GM12878 (cell line): ENCODE measurements at regions of chr10 and their contacts with region 1.

Region 1: DNA sequence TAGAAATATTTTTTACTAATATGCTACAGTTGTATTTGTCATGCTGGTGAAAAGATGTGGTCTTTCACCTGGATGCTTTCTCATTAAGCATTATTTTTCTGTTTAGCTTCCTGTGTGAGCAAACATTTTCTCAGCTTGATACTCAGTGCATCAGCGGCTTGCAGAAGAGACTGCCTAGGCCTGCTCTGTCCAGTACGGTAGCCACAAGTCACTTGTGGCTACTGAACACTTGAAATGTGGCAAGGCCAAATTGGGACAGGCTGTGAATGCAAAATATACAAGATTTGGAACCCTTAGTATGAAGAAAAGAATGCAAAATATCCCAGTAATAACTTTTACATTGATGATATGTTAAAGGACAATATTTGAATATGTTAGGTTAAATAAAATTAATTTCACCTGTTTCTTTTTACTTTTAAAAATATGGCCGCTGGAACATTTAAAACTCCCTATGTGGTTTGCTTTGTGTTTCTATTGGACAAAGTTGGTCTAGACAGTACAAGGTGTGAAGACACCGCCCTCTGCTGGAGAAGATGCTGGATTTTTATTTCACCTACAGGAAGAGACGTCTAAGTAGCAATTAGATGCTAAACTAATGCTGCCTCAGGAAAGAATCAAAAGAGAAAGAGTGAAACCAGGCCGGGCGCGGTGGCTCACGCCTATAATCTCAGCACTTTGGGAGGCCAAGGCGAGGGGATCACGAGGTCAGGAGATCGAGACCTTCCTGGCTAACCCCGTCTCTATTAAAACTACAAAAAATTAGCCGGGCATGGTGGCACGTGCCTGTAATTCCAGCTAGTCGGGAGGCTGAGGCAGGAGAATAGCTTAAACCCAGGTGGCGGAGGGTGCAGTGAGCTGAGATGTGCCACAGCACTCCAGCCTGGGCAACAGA is 5.3 kb downstream of the SRGN start:
- DNase-seq: peak; percentile 69
- ATAC-seq: peak; percentile 43
- H3K4me3 ChIP-seq: peak overlapping the region; percentile 72
- H3K27ac ChIP-seq: peak overlapping the region; percentile 97
- H3K4me1 ChIP-seq: no peaks in the 10 kb centered on the region
- H3K27me3 ChIP-seq: no peaks in the 10 kb centered on the region
- CTCF ChIP-seq: peak; percentile 53 to 68 (median 60); a peak in 5 of 6 replicates
- EP300 ChIP-seq: no peak
- POLR2A ChIP-seq: no peak
- RAD21 ChIP-seq: peak; percentile 94

Region 2: GRCh38 chr10:68271196-68271882 is 821.9 kb before region 1 on chr10:
- CTCF ChIA-PET with region 1: no interaction called
- POLR2A ChIA-PET with region 1: no interaction called
- RAD21 ChIA-PET with region 1: no interaction called
- SMC1A ChIA-PET with region 1: no interaction called
- in situ Hi-C with region 1: no loop called
- intact Hi-C with region 1: no loop called
- DNase-seq: no peak
- ATAC-seq: no peak
- H3K4me3 ChIP-seq: no peak overlapping the region
- H3K27ac ChIP-seq: no peak overlapping the region
- H3K4me1 ChIP-seq: no peaks in the 10 kb centered on the region
- H3K27me3 ChIP-seq: no peaks in the 10 kb centered on the region
- CTCF ChIP-seq: no peak
- EP300 ChIP-seq: no peak
- POLR2A ChIP-seq: no peak
- RAD21 ChIP-seq: no peak

Region 3: GRCh38 chr10:68955832-68956532 is 137.2 kb before region 1 on chr10 and contains the start of gene DDX21:
- CTCF ChIA-PET with region 1: interaction called, 10 read pairs
- POLR2A ChIA-PET with region 1: interaction called, 5 read pairs
- RAD21 ChIA-PET with region 1: no interaction called
- SMC1A ChIA-PET with region 1: interaction called, 6 read pairs
- in situ Hi-C with region 1: no loop called
- intact Hi-C with region 1: loop called (anchors 2 kb)
- DNase-seq: peak; percentile 76
- ATAC-seq: peak; percentile 87
- H3K4me3 ChIP-seq: peak within 1 kb of the TSS; percentile 93
- H3K27ac ChIP-seq: peak within 1 kb of the TSS; percentile 94
- H3K4me1 ChIP-seq: no peaks in the 10 kb centered on the region
- H3K27me3 ChIP-seq: no peaks in the 10 kb centered on the region
- CTCF ChIP-seq: peak; percentile 66 to 77 (median 69)
- EP300 ChIP-seq: no peak
- POLR2A ChIP-seq: peak; percentile 94
- RAD21 ChIP-seq: peak; percentile 53
- polyA plus RNA-seq, gene DDX21: 80.8 to 88.5 TPM

Region 4: GRCh38 chr10:69045441-69046300 is 47.5 kb before region 1 on chr10:
- CTCF ChIA-PET with region 1: interaction called, 71 read pairs
- POLR2A ChIA-PET with region 1: interaction called, 312 read pairs
- RAD21 ChIA-PET with region 1: interaction called, 544 read pairs
- SMC1A ChIA-PET with region 1: interaction called, 355 read pairs
- in situ Hi-C with region 1: no loop called
- intact Hi-C with region 1: loop called (anchors 1 kb)
- DNase-seq: peak; percentile 93
- ATAC-seq: peak; percentile 81
- H3K4me3 ChIP-seq: peak overlapping the region; percentile 14; the same call in 1 of the 2 replicates
- H3K27ac ChIP-seq: peak overlapping the region; percentile 94
- H3K4me1 ChIP-seq: peaks cover 70% of the 10 kb centered on the region
- H3K27me3 ChIP-seq: no peaks in the 10 kb centered on the region
- CTCF ChIP-seq: no peak
- EP300 ChIP-seq: peak; percentile 78 to 84; a peak in 3 of 4 replicates
- POLR2A ChIP-seq: peak; percentile 52; the same call in 1 of the 2 replicates
- RAD21 ChIP-seq: no peak; the same call in 1 of the 2 replicates

Region 5: DNA sequence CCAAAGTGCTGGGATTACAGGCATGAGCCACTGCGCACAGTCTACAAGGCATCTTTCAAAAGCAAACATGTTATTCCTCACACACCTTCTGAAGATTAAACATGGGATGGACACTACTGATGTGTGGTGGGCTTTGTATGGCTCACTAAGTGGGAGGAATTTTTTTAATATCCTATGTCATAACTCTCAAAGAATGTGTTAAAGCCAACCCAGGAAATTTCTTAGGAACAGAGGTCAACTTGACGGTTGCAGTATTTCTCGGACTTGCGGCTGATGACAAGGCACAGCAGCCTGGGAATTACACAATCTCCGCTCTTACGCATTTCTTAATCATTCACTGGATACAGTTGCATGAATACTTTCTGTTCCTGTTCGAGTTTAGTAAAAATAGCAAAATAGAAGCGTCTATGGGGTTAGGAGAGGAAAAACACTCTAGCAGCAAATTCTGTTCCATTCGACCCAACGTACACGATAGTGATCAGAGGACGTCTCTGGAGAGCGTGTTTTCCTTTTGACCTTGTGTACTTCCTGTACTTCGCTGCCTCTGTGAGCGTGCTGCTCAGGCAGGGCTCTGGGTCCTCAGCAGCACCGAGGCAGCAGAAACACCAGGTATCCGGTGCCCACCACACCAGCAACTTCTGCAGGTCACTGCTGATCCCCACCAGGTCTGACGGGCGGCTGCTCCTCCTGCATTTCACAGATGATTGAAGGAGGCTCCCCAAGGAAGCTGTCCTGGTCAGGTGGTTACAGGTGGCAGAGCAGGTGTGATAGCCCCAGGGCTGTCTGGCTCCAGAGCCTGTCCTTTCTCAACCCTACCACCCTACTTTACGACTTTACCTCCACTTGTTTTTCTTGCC is 31.7 kb before region 1 on chr10:
- CTCF ChIA-PET with region 1: interaction called, 66 read pairs
- POLR2A ChIA-PET with region 1: interaction called, 312 read pairs
- RAD21 ChIA-PET with region 1: interaction called, 544 read pairs
- SMC1A ChIA-PET with region 1: interaction called, 355 read pairs
- in situ Hi-C with region 1: no loop called
- intact Hi-C with region 1: no loop called
- DNase-seq: no peak
- ATAC-seq: peak; percentile 65
- H3K4me3 ChIP-seq: peak overlapping the region; percentile 44; the same call in 1 of the 2 replicates
- H3K27ac ChIP-seq: peak overlapping the region; percentile 74
- H3K4me1 ChIP-seq: peaks cover 49% of the 10 kb centered on the region
- H3K27me3 ChIP-seq: no peaks in the 10 kb centered on the region
- CTCF ChIP-seq: no peak
- EP300 ChIP-seq: peak in 1 of 2 experiments; percentile 70; a peak in 2 of 4 replicates
- POLR2A ChIP-seq: peak; percentile 67
- RAD21 ChIP-seq: no peak

Region 6: GRCh38 chr10:69222157-69223027 is 129.2 kb after region 1 on chr10:
- CTCF ChIA-PET with region 1: interaction called, 6 read pairs
- POLR2A ChIA-PET with region 1: interaction called, 4 read pairs
- RAD21 ChIA-PET with region 1: interaction called, 5 read pairs
- SMC1A ChIA-PET with region 1: interaction called, 5 read pairs
- in situ Hi-C with region 1: no loop called
- intact Hi-C with region 1: loop called (anchors 2 kb)
- DNase-seq: peak; percentile 88
- ATAC-seq: peak; percentile 97
- H3K4me3 ChIP-seq: peak overlapping the region; percentile 63
- H3K27ac ChIP-seq: peak overlapping the region; percentile 80
- H3K4me1 ChIP-seq: peaks cover 25% of the 10 kb centered on the region
- H3K27me3 ChIP-seq: no peaks in the 10 kb centered on the region
- CTCF ChIP-seq: peak; percentile 71 to 82 (median 77)
- EP300 ChIP-seq: peak; percentile 83 to 86
- POLR2A ChIP-seq: peak; percentile 69
- RAD21 ChIP-seq: peak; percentile 62